ENCODE measurements at regions of chr3 and their contacts with region 1.

Region 1: DNA sequence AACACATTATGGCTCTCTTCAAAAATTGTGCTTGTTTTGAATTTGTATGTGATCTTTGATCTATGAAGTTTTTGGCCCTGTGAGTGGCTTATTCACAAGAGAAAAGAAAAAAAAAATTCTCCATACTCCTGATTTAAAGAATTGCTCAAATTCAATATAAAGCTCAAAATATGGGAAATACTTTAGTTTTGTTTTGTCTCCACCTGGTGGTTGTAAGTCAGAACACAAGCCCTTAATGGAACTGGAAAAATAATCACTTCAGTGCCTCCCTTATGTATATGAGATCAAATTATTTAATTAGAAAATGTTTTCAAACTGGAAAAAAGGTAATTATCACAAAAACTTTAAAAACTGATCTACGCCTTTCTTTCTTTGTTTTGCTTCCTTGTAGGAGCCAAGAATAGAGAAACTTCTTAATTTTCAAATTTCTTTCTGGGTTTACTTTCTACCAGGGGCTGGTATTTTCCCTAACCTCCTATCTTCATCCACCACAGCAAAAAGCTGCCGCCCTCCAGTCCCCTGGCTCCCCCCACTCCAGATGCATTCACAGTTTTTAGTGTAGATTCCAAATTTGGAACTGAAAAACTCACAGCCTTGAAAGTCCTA is 50.6 kb downstream of the SERP1 start:
- DNase-seq: peak in 1 of 7 donors; percentile 16
- H3K4me3 ChIP-seq: no peak overlapping the region
- H3K27ac ChIP-seq: no peak overlapping the region
- H3K4me1 ChIP-seq: no peaks in the 10 kb centered on the region
- H3K27me3 ChIP-seq: no peaks in the 10 kb centered on the region
- CTCF ChIP-seq: peak; percentile 64 to 89 (median 80)
- POLR2A ChIP-seq: no peak

Region 2: GRCh38 chr3:150227839-150228238 is 267.8 kb before region 1 on chr3:
- intact Hi-C with region 1: loop called (anchors 5 to 10 kb)
- DNase-seq: peak in 6 of 7 donors; percentile 37 to 66 (median 54)
- H3K4me3 ChIP-seq: no peak overlapping the region
- H3K27ac ChIP-seq: no peak overlapping the region
- H3K4me1 ChIP-seq: peaks cover 0 to 6% of the 10 kb centered on the region in 2 donors
- H3K27me3 ChIP-seq: no peaks in the 10 kb centered on the region
- CTCF ChIP-seq: peak; percentile 33 to 59 (median 55)
- POLR2A ChIP-seq: no peak

Region 3: DNA sequence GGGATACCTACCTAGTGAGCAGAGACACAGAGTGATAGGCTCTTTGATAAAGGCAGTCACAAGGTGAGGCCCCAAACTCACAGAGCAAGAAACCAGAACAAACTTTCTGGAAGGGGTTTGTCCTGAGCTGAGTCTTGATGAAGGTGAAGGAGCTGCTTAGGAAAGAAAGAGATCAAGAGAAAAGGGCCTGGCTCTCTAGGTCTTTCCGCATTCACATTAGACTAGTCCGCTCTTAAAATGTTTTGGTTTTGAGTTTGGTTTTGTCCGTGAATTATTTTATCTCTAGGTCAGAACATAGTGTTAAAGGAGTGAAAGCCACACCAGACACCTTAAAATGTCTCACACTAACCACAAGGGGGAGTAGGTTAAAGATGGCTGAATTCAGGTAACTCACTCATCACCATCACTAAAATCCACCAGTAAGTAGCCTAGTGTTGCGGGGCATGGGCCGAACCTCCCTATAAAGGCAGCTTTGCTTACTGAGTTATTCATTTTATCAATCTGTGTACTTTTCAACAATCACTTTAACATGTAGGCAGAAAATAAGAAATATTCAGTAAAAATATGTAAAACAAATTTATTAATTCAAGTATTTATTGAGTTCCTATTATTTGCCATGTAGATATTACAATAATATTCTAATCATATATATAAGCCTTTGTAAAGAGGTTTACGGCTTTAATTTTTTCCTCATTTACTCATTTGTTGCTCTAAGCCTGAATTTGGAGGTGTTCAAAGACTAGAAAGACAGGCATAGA is 209.1 kb before region 1 on chr3:
- intact Hi-C with region 1: loop called in 1 of 2 experiments (anchors 5 kb)
- DNase-seq: peak in 2 of 7 donors; percentile 14 to 24
- H3K4me3 ChIP-seq: no peak overlapping the region
- H3K27ac ChIP-seq: no peak overlapping the region
- H3K4me1 ChIP-seq: no peaks in the 10 kb centered on the region
- H3K27me3 ChIP-seq: no peaks in the 10 kb centered on the region
- CTCF ChIP-seq: peak; percentile 36 to 72 (median 62)
- POLR2A ChIP-seq: no peak

Region 4: GRCh38 chr3:150409512-150410310 is 86.0 kb before region 1 on chr3:
- intact Hi-C with region 1: loop called in 1 of 2 experiments (anchors 10 kb)
- DNase-seq: peak; percentile 73 to 85 (median 80)
- H3K4me3 ChIP-seq: peak overlapping the region; percentile 63 to 90 (median 76)
- H3K27ac ChIP-seq: peak overlapping the region; percentile 98 to 100 (median 99)
- H3K4me1 ChIP-seq: peaks cover 23 to 44% of the 10 kb centered on the region in 2 donors
- H3K27me3 ChIP-seq: no peaks in the 10 kb centered on the region
- CTCF ChIP-seq: peak; percentile 43 to 67 (median 60)
- POLR2A ChIP-seq: peak; percentile 40 to 76